Right ventricle myocardium superior (tissue), 1 donor: ENCODE measurements at regions of chr9 and their contacts with region 1.

Region 1: DNA sequence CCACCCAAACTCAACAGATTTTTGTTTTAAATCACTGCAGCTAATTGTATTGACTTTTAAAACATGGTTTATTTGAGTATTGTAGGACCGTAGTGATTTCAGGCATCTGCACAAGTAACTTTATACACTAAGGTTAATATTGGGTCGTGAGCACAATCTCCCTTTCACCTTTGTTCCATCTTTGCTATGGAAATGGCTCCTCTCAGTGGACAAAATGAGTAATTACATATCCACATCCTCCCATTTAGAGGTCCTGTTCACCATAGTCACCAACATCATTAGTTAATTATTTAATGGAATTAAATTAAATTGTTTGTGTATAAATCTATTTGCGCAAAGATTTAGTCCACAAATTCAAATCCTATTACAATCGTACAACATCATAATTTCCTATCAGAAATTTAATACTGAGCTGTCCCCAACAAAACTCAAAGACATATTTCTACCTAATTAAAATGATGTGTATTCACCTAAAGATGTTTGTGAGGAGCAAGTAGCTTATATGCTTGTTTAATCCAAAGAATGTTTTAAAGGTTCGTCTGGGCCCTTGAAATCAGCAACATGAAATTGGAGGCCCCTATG is 173.0 kb upstream of the DAPK1 start:
- DNase-seq: no peak
- ATAC-seq: peak; percentile 92

Region 2: DNA sequence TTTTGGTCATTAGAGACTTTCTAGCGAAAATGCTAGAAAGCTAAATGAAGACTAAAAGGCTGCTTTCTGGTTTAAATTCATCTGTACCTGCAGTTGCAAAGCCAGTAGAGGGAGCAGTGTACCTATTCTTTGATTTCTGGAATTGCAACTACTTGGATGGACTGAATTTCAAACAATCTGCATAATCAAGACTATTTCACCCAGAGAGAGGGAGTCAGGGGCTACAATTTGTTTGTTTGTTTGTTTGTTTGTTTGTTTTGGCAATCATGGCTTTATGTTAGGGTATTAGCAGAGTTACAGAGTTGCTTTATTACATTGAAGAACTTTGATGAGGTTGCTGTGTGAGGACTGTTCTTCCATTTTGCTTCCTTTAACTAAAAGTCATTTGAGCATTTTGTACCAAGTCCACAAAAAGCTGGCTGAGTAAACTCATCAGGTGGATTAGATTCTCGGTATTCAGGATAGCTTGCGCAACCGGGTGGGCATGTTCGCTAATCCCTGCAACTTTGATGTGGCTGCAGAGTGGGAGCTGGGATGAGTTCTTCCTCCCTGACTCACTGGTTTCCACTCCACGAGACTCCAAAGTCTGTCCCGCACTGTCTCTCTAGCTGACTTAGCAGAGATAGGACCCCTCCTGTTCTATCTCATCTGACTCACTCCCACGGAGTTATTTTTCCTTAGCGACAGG is 890.5 kb before region 1 on chr9:
- intact Hi-C with region 1: loop called (anchors 2 kb)
- DNase-seq: no peak
- ATAC-seq: peak; percentile 74